Esophagus muscularis mucosa (tissue), 4 donors: ENCODE measurements at regions of chr13 and their contacts with region 1.

Region 1: DNA sequence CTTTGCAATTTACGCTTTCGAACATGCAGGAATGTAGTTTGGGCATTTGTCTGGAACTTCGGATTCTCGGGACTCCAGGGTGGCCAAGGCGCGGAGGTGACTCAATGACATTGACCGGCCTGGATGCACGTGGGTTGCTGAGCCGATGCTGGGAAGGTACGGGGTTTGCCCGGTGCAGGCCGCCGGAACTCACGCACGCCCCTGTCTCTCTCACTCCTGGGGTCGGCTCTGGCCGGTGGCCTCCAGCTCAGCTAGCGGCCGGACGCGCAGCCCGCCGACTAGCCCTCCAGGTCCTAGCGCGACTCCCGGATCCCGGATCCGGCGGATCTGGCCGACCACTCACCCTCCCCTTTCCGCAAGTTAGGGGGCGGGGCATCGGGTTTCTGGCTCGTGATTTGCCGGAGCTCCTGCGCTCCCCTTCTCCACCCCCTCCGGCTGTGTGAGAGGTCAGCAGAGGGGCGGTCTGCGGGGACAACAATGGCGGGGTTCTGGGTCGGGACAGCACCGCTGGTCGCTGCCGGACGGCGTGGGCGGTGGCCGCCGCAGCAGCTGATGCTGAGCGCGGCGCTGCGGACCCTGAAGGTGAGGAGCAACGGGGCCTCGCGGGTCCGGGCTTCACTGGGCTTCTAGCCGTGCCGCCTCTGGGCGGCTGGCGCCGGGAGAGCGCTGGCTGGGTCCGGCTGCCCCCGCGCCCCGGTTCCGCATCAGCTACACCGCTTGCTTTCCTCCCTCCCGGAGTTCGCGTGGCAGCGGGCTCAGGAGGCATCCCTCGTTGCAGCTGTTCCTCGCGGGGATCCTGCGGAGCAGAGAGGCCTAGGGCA is at the start of gene PCCA:
- DNase-seq: peak; percentile 98
- H3K4me3 ChIP-seq: peak within 1 kb of the TSS; percentile 81 to 96 (median 87)
- H3K27ac ChIP-seq: peak within 1 kb of the TSS; percentile 81 to 91 (median 83)
- H3K4me1 ChIP-seq: peaks cover 16 to 47% (median 31%) of the 10 kb centered on the region in 4 donors
- H3K27me3 ChIP-seq: no peaks in the 10 kb centered on the region
- CTCF ChIP-seq: no peak
- EP300 ChIP-seq: no peak
- POLR2A ChIP-seq: no peak
- total RNA-seq, gene PCCA: 33.8 to 40.3 (median 39.0) TPM

Region 2: DNA sequence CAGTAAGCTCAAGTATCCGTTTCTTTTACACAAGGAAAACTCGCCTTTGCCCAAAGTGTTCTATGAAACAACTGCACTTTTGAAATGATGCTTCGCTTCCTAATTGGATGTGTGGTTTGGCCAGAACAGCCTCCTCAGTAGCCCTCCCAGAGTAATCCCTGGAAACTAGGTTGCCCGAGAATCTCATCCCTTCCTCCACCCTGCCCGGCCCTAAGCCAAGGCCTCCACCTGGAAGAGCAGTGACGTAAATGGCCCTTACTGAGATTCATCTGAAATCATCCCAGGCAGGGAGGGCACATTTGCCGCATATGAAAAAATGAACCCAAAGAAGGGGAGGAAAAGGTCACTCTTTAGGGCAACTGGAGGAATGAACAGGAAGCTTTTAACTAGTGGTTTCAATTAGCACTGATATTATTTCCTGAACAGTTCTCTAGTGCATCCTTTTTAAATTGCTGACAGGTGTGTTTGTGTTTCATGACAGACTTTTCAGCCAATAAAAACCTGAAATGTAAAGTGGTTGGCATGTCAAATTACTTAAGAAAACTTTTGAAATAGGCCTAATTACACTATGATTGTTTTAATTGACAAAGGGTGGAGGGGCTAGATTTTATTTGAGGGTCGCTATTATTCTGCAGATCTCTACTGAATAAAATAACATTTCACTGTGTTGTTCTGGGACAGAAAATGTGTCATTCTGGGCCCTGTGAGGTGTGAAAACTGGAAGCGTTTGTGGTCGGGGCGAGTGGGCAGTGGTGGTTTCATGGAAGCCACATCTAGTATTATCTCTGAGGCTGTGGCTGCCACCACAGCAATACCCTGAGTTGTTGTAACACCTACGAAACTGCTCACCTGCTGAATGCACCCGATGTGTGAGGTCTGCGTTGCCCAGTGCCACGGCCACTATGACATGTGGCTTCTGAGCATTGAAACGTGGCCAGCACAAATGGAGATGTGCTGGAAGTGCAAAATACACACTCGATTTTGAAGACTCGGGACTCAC is 229.4 kb before region 1 on chr13:
- intact Hi-C with region 1: no loop called
- DNase-seq: peak; percentile 84
- H3K4me3 ChIP-seq: no peak overlapping the region
- H3K27ac ChIP-seq: no peak overlapping the region
- H3K4me1 ChIP-seq: no peaks in the 10 kb centered on the region
- H3K27me3 ChIP-seq: no peaks in the 10 kb centered on the region
- CTCF ChIP-seq: no peak
- EP300 ChIP-seq: no peak
- POLR2A ChIP-seq: no peak

Region 3: GRCh38 chr13:99980201-99980823 is 108.5 kb before region 1 on chr13:
- intact Hi-C with region 1: loop called (anchors 10 kb)
- DNase-seq: no peak
- H3K4me3 ChIP-seq: peak overlapping the region; percentile 50 to 63 (median 52)
- H3K27ac ChIP-seq: no peak overlapping the region
- H3K4me1 ChIP-seq: peaks cover 33 to 64% (median 58%) of the 10 kb centered on the region in 4 donors
- H3K27me3 ChIP-seq: peaks cover 36 to 100% (median 90%) of the 10 kb centered on the region in 4 donors
- CTCF ChIP-seq: no peak
- EP300 ChIP-seq: no peak
- POLR2A ChIP-seq: no peak